ENCODE measurements at regions of chr1 and their contacts with region 1.

Region 1: GRCh38 chr1:92754000-92754718 is 30.7 kb downstream of the EVI5 start:
- DNase-seq: no peak
- H3K4me3 ChIP-seq: no peak overlapping the region
- H3K27ac ChIP-seq: no peak overlapping the region
- H3K4me1 ChIP-seq: peaks cover 10% of the 10 kb centered on the region
- H3K27me3 ChIP-seq: no peaks in the 10 kb centered on the region
- CTCF ChIP-seq: no peak
- EP300 ChIP-seq: no peak
- POLR2A ChIP-seq: no peak

Region 2: DNA sequence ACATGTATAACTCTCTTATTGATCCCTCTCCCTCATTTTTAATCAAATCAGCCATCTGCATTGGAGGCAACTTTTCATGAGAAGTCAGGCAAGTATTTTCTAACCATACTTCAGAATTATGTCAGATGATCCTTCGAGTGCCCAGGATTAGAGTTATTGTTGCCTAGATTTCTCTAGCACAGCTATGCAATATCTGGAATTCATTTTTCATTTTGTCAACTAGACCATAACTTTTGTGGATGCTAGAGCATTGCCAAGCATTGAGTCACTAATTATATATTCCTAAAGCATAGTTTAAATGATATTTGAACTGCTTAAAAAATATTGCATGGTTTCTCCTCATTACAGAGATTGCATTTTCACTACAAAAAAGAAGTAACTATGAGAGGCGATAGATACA is 1370.7 kb before region 1 on chr1:
- intact Hi-C with region 1: no loop called
- DNase-seq: no peak
- H3K4me3 ChIP-seq: no peak overlapping the region
- H3K27ac ChIP-seq: no peak overlapping the region
- H3K4me1 ChIP-seq: no peaks in the 10 kb centered on the region
- H3K27me3 ChIP-seq: no peaks in the 10 kb centered on the region
- CTCF ChIP-seq: no peak
- EP300 ChIP-seq: no peak
- POLR2A ChIP-seq: no peak

Region 3: GRCh38 chr1:92817986-92818764 is 64.0 kb after region 1 on chr1:
- intact Hi-C with region 1: loop called in 1 of 4 experiments (anchors 10 kb)
- DNase-seq: no peak
- H3K4me3 ChIP-seq: no peak overlapping the region
- H3K27ac ChIP-seq: no peak overlapping the region
- H3K4me1 ChIP-seq: no peaks in the 10 kb centered on the region
- H3K27me3 ChIP-seq: no peaks in the 10 kb centered on the region
- CTCF ChIP-seq: peak in 2 of 3 donors; percentile 24 to 26
- EP300 ChIP-seq: no peak
- POLR2A ChIP-seq: no peak

Region 4: GRCh38 chr1:92862605-92863004 is 108.4 kb after region 1 on chr1:
- intact Hi-C with region 1: no loop called
- DNase-seq: no peak
- H3K4me3 ChIP-seq: no peak overlapping the region
- H3K27ac ChIP-seq: no peak overlapping the region
- H3K4me1 ChIP-seq: no peaks in the 10 kb centered on the region
- H3K27me3 ChIP-seq: no peaks in the 10 kb centered on the region
- CTCF ChIP-seq: no peak
- EP300 ChIP-seq: no peak
- POLR2A ChIP-seq: no peak

Measured in ovary (tissue), 10 donors.